HepG2 (cell line): ENCODE measurements at regions of chr1 and their contacts with region 1.

Region 1: DNA sequence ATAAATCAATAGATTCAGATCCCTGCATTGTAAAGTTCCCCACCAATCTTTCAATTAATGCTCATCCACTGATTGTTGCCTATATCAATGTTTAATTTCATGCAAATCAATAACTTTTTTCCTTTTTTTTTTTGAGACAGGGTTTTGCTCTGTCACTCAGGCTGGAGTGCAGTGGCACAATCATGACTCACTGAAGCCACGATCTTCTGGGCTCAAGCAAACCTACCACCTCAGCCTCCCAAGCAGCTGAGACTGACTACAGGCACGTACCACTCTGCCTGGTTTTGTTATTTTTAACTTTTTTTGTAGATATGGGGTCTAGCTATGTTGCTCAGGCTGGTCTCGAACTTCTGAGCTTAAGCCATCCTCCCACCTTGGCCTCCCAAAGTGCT is 25.7 kb downstream of the DIO1 start:
- DNase-seq: no peak
- ATAC-seq: peak; percentile 57
- H3K4me3 ChIP-seq: no peak overlapping the region
- H3K27ac ChIP-seq: peak overlapping the region; percentile 51
- H3K4me1 ChIP-seq: peaks cover 32% of the 10 kb centered on the region
- H3K27me3 ChIP-seq: no peaks in the 10 kb centered on the region
- CTCF ChIP-seq: no peak
- EP300 ChIP-seq: no peak
- POLR2A ChIP-seq: no peak
- RAD21 ChIP-seq: no peak

Region 2: GRCh38 chr1:53878492-53879105 is 41.1 kb before region 1 on chr1:
- CTCF ChIA-PET with region 1: interaction called, 7 read pairs
- POLR2A ChIA-PET with region 1: no interaction called
- in situ Hi-C with region 1: no loop called
- intact Hi-C with region 1: loop called (anchors 1 kb)
- DNase-seq: peak; percentile 57
- ATAC-seq: no peak
- H3K4me3 ChIP-seq: no peak overlapping the region
- H3K27ac ChIP-seq: no peak overlapping the region
- H3K4me1 ChIP-seq: no peaks in the 10 kb centered on the region
- H3K27me3 ChIP-seq: no peaks in the 10 kb centered on the region
- CTCF ChIP-seq: peak; percentile 67
- EP300 ChIP-seq: no peak
- POLR2A ChIP-seq: no peak
- RAD21 ChIP-seq: peak; percentile 49; the same call in 1 of the 2 replicates